Upper lobe of right lung (tissue), 1 donor: ENCODE measurements at regions of chr5 and their contacts with region 1.

Region 1: DNA sequence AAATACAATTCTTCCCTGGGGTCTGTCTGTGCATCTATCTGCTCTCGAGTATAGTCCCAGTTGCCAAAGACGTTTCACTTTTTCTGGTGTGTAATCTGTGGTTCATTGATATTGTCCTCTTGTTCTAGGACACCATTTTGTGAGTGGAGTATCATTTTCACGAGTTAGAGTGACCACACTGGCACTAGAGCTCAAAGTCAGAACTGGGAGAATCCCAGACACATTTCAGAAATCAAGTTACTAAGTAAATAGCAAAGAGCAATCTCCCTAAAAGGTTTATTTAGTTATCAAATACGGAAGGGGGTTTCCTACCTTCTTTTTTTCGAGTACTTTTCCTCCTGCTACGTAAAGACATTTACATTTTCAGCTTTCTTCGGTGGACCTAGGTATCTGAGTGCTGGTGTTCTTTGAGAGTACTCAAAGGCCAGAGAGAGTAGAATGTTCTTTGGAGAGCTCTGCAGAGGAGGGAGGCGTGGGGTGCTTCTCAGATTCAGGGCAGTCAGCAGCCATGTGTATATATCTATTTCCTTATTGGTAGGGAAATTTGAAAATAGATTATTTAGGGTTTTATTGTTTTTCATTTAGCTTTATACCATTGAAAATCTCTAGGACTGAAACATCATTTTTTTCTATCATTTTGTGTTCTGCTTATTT is 8.9 kb upstream of the HSPA9 start:
- DNase-seq: no peak
- ATAC-seq: peak; percentile 59
- H3K4me3 ChIP-seq: no peak overlapping the region
- H3K27ac ChIP-seq: no peak overlapping the region
- H3K4me1 ChIP-seq: no peaks in the 10 kb centered on the region
- H3K27me3 ChIP-seq: no peaks in the 10 kb centered on the region
- CTCF ChIP-seq: no peak

Region 2: GRCh38 chr5:138632900-138633489 is 48.9 kb after region 1 on chr5:
- intact Hi-C with region 1: loop called (anchors 10 kb)
- DNase-seq: peak; percentile 73
- ATAC-seq: peak; percentile 77
- H3K4me3 ChIP-seq: no peak overlapping the region
- H3K27ac ChIP-seq: no peak overlapping the region
- H3K4me1 ChIP-seq: no peaks in the 10 kb centered on the region
- H3K27me3 ChIP-seq: no peaks in the 10 kb centered on the region
- CTCF ChIP-seq: peak; percentile 52